SK-N-SH (cell line): ENCODE measurements at regions of chr4 and their contacts with region 1.

Region 1: GRCh38 chr4:7323872-7324650 is 110.7 kb downstream of the PSAPL1 start:
- DNase-seq: no peak
- H3K4me3 ChIP-seq: no peak overlapping the region
- H3K27ac ChIP-seq: no peak overlapping the region
- H3K4me1 ChIP-seq: peaks cover 0 to 6% of the 10 kb centered on the region in 2 experiments; a peak in 3 of 4 replicates
- H3K27me3 ChIP-seq: no peaks in the 10 kb centered on the region
- CTCF ChIP-seq: peak; percentile 28; the same call in 1 of the 2 replicates
- EP300 ChIP-seq: no peak
- RAD21 ChIP-seq: no peak

Region 2: DNA sequence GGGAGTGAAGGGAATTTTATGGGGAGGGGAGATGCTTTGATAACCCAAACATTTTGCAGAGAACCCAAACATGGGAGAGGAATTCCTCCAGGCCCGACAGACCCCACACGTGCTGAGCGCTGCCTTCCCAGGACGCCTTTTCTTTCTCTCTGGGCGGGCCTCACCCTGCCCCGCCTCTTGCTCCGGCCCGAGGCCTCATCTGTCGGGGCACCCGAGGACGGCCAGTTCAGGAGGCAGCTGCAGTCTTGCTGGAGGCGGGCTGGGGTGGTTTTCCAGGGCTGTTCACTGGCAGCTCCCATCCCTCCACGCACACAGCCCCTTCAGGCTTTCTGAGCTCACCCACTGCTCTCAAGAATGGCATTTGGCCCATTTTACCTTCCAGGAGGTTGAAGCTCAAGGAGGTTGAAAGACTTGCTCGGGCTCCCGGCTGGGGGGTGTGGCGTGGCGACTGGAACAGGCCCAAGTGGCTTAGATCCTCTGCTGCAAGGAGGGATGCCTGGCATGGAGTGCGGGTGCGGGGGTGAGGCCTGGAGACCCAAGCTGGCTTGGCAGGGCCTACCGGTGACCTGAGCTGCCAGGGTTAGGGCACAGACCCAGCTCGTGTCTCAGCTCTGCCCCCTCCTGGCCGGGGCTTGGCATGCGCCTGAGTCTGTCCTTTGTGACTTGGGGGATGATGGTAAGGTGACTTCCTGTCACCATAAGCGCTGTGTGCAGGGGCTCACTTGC is 11.4 kb after region 1 on chr4:
- CTCF ChIA-PET with region 1: interaction called, 19 read pairs
- POLR2A ChIA-PET with region 1: no interaction called
- DNase-seq: peak; percentile 83
- H3K4me3 ChIP-seq: no peak overlapping the region
- H3K27ac ChIP-seq: no peak overlapping the region
- H3K4me1 ChIP-seq: no peaks in the 10 kb centered on the region
- H3K27me3 ChIP-seq: no peaks in the 10 kb centered on the region
- CTCF ChIP-seq: peak; percentile 69
- EP300 ChIP-seq: no peak
- RAD21 ChIP-seq: peak; percentile 68

Region 3: DNA sequence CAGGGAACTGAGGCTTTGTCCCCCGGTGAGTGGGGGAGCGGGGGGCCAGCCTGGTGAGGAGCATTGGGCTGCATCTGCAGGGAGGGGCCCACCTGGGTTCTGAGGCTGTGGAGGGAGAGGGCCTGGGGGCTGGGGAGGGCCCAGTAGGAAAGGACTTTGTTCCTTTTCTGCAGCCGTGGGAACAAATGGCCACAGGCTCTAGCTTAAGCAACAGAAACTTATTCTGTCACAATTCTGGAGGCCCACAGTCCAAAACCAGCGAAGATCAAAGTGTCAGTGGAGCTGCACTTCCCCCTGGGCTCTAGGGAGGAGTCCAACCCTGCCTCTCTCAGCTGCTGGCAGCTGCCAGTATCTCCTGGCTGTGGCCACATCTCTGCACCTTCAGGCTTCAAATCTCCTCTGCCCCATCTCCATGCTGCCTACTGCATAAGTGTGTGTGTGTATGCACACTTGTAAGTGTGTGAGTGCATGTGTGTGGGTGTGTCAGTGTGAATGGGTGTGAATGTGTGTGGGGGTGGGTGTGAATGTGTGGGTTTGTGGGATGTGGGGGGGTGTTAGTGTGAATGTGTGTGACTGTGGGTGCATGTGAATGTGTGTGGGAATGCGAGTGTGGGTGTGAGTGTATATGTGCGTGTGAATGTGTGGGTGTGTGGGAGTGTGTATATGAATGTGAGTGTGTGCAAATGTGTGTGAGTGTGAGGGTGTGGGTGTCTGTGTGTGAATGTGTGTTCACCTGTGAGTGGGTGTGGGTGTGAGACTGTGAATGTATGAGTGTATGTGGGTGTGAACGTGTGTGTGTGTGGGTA is 315.1 kb after region 1 on chr4:
- CTCF ChIA-PET with region 1: no interaction called
- POLR2A ChIA-PET with region 1: no interaction called
- DNase-seq: no peak
- H3K4me3 ChIP-seq: no peak overlapping the region
- H3K27ac ChIP-seq: no peak overlapping the region
- H3K4me1 ChIP-seq: no peaks in the 10 kb centered on the region
- H3K27me3 ChIP-seq: no peaks in the 10 kb centered on the region
- CTCF ChIP-seq: no peak
- EP300 ChIP-seq: no peak
- RAD21 ChIP-seq: no peak